Dorsolateral prefrontal cortex (tissue), 120 donors: ENCODE measurements at regions of chr15 and their contacts with region 1.

Region 1: GRCh38 chr15:68820295-68821189 is at the start of gene ANP32A:
- DNase-seq: peak; percentile 91 to 97 (median 96)
- H3K4me3 ChIP-seq: peak within 1 kb of the TSS; percentile 68 to 99 (median 91)
- H3K27ac ChIP-seq: peak within 1 kb of the TSS; percentile 95 to 100 (median 99)
- H3K27me3 ChIP-seq: no peaks in the 10 kb centered on the region
- CTCF ChIP-seq: no peak
- total RNA-seq, gene ANP32A: 83.9 to 167 (median 121) TPM

Region 2: DNA sequence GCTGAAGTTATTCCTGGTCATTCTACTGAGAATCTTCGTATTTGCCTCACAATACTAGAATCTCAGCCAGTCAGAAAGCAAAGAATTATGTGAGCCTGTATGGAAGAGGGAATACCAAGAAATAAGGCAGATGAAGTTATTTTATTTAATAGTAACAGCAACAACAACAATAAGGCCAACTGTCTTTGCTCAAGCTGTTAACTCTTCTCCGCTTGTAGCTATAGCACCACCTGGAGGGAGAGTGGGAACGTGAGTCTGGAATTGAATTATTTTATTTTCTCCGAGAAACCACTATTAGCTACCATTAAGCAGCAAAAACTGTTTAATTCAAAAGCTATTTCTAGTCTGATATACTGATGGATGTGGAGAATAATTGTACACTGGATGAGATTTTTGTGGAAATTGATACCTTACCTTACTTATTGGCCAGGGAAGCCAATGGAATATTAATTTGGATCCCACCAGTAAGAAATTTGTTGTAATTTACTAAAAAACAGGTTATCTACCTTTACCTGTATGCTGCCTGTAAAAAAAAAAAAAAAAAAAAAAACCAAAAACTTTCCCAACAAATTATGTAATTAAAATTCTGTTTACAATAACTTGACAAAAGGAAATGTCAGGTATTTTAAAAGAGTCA is 665.5 kb before region 1 on chr15:
- intact Hi-C with region 1: no loop called
- DNase-seq: peak in 3 of 10 donors; percentile 6 to 46 (median 44)
- H3K4me3 ChIP-seq: no peak overlapping the region
- H3K27ac ChIP-seq: peak overlapping the region in 1 of 59 donors; percentile 1
- H3K27me3 ChIP-seq: no peaks in the 10 kb centered on the region
- CTCF ChIP-seq: peak; percentile 53 to 90 (median 74)

Region 3: DNA sequence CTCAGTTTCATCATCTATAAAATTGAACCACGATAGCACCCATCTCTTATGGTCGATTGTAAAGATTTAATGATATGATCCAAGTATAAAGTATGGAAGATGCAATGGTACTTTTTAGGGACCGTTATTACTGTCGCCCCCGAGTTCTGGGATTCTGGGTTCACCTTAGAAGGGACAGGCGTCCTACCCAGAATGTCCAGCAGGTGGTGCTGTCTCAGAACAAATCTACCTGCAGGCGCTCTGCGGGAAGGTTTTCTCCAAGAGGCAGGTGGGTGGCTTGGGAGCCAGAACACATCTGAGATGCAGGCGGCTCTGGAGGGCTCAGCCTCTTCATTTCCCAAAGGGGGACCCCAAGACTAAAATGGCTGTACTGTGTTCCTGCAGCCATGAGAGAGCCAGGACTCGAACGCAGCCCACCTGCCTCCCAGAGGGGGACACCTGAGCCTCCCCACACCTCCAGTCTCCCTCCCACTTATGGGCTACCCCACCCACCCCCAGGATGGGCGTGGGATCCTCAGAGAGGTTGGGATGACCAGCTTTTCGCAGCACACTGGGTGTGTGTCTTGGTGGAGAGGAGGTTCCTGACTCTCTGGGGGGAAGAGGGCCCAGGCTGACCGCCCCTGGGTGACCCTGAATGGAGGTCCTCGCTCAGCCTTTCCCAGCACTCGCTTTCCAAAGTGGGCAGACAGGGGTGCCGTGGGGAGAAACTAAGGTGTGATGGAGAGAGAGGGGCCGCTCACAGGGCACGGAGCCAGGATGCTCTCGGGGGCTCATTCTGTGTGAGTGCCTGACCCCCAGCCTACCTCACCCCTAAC is 269.9 kb before region 1 on chr15:
- intact Hi-C with region 1: loop called (anchors 5 kb)
- DNase-seq: peak; percentile 76 to 91 (median 84)
- H3K4me3 ChIP-seq: no peak overlapping the region
- H3K27ac ChIP-seq: no peak overlapping the region
- H3K27me3 ChIP-seq: no peaks in the 10 kb centered on the region
- CTCF ChIP-seq: peak; percentile 82 to 99 (median 97)

Region 4: DNA sequence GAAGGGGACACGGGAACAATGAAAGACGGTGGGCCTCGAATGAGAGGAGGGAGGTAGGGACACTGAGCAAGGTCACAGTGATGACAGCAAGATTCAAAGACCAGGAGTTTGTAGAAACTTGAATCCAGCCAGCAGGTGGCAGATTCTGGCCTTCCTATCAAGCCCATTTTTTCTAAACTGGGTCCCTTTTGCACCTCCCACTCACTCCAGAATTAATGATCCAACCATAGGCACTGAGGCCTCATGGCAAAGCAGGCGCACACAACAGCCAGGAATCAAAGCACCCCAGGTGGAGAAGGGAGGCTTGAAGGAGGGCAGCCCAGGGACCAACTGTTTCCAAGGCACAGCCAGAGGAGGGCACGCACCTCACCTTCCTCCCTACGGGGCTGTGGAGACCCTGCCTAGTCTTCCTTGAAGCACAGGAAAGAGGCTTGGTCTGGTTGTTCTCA is 90.0 kb before region 1 on chr15:
- intact Hi-C with region 1: loop called (anchors 2 to 5 kb)
- DNase-seq: peak in 9 of 10 donors; percentile 28 to 77 (median 58)
- H3K4me3 ChIP-seq: no peak overlapping the region
- H3K27ac ChIP-seq: peak overlapping the region in 53 of 59 donors; percentile 12 to 89 (median 65)
- H3K27me3 ChIP-seq: no peaks in the 10 kb centered on the region
- CTCF ChIP-seq: peak; percentile 64 to 89 (median 78)

Region 5: DNA sequence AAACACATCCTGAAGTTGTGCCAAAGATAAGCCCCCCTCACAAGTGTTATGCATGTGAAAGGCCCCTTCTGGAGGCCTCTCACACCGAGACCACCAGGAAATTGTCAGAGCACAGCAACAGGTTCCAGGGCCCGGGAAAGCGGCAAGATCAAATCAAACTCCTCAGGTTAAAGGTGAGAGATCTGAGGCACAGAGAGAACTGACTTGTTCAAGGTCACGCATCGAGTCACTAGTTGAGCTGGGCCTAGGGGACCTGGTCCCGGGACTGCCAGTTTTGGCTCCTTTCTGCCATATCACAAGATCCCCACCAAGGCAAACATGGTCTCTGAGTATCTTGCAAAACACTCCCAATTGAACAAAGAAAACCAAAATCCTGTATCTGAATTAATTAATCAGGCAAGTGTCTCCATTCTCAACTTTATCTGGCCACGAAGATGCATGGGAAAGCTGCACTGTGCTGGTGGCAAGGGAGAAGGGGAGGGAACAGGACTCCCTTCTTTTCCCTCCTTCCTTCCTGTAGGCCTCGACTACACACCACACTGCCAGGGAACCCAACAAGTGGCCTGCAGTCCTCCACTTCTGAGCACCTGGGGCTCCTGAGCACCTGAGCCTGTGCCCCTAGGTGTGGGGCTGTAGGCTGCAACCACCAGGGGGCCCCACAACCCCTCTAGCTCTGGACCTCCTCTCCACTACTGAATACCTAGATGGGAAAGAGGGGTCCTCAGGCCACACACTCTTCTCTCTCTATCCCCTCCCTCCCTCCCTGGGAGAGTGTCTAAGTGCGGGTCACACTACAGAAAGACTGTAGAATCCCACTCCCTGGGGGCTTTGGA is 37.1 kb before region 1 on chr15:
- intact Hi-C with region 1: loop called (anchors 5 kb)
- DNase-seq: no peak
- H3K4me3 ChIP-seq: no peak overlapping the region
- H3K27ac ChIP-seq: peak overlapping the region in 49 of 59 donors; percentile 9 to 84 (median 73)
- H3K27me3 ChIP-seq: no peaks in the 10 kb centered on the region
- CTCF ChIP-seq: peak in 54 of 56 donors; percentile 19 to 72 (median 55)

Region 6: GRCh38 chr15:69452692-69453521 is 632.4 kb after region 1 on chr15 and contains the start of gene RPLP1:
- intact Hi-C with region 1: loop called in 1 of 2 experiments (anchors 10 kb)
- DNase-seq: peak; percentile 96 to 98 (median 97)
- H3K4me3 ChIP-seq: peak within 1 kb of the TSS; percentile 64 to 100 (median 93)
- H3K27ac ChIP-seq: peak within 1 kb of the TSS; percentile 33 to 94 (median 86)
- H3K27me3 ChIP-seq: no peaks in the 10 kb centered on the region
- CTCF ChIP-seq: peak in 18 of 56 donors; percentile 6 to 47 (median 28)
- total RNA-seq, gene RPLP1: 273 to 656 (median 397) TPM